ENCODE measurements at regions of chr10 and their contacts with region 1.

Region 1: GRCh38 chr10:109852475-109853037 is 70.8 kb downstream of the XPNPEP1 start:
- DNase-seq: peak; percentile 89
- H3K4me3 ChIP-seq: no peak overlapping the region
- H3K27ac ChIP-seq: no peak overlapping the region
- H3K4me1 ChIP-seq: peaks cover 3% of the 10 kb centered on the region
- H3K27me3 ChIP-seq: no peaks in the 10 kb centered on the region
- CTCF ChIP-seq: peak; percentile 97

Region 2: GRCh38 chr10:108112219-108112618 is 1740.3 kb before region 1 on chr10:
- CTCF ChIA-PET with region 1: no interaction called
- POLR2A ChIA-PET with region 1: no interaction called
- intact Hi-C with region 1: loop called (anchors 5 kb)
- DNase-seq: peak; percentile 34
- H3K4me3 ChIP-seq: no peak overlapping the region
- H3K27ac ChIP-seq: no peak overlapping the region
- H3K4me1 ChIP-seq: no peaks in the 10 kb centered on the region
- H3K27me3 ChIP-seq: no peaks in the 10 kb centered on the region
- CTCF ChIP-seq: peak; percentile 64

Region 3: GRCh38 chr10:109427411-109427810 is 425.1 kb before region 1 on chr10:
- CTCF ChIA-PET with region 1: no interaction called
- POLR2A ChIA-PET with region 1: no interaction called
- intact Hi-C with region 1: loop called (anchors 10 kb)
- DNase-seq: peak; percentile 84
- H3K4me3 ChIP-seq: no peak overlapping the region
- H3K27ac ChIP-seq: peak overlapping the region; percentile 75
- H3K4me1 ChIP-seq: peaks cover 82% of the 10 kb centered on the region
- H3K27me3 ChIP-seq: no peaks in the 10 kb centered on the region
- CTCF ChIP-seq: peak; percentile 68

Region 4: DNA sequence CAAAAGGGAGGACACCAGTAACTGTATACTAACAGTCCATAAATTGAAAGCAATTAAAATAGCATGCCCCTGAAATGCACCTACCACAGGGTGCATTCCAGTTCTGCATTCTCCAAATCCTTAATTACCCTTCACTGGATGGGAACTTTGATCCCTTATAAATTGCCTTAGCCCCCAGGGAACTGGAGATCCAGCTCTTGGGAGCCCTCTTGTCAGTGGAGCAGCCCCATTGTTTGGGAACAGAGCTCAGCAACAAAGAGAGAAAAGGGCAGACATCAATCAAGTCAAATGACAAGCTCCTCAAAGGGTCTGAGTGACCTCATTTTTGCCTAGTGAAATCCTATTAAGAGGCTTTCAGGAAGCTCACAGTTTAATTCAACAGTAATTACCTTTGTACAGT is 401.9 kb before region 1 on chr10:
- CTCF ChIA-PET with region 1: no interaction called
- POLR2A ChIA-PET with region 1: no interaction called
- intact Hi-C with region 1: loop called (anchors 5 kb)
- DNase-seq: peak; percentile 82
- H3K4me3 ChIP-seq: no peak overlapping the region
- H3K27ac ChIP-seq: no peak overlapping the region
- H3K4me1 ChIP-seq: peaks cover 42% of the 10 kb centered on the region
- H3K27me3 ChIP-seq: no peaks in the 10 kb centered on the region
- CTCF ChIP-seq: no peak

Measured in A673 (cell line).